ENCODE measurements at regions of chrX and their contacts with region 1.

Region 1: DNA sequence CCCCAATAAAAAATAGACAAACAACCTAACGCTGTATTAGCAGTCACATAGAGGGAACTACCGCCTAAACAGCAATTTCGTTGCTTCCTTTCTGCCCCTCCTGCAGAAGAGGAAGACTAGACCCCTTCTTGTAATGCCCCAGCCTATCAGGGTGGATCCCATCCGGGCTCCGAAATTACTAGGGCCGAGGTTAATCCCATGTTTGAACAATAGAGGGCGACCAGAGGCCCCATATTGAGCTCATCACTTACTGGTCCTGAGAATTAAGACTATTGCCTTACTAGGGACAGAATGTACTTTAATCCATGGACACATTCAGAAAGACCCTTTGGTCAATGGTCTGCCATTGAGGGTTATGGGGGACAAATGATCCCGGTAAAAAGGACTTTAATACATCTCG is 11.8 kb upstream of the ZNF630 start:
- DNase-seq: no peak
- ATAC-seq: peak; percentile 94
- H3K4me3 ChIP-seq: no peak overlapping the region
- H3K27ac ChIP-seq: no peak overlapping the region
- H3K4me1 ChIP-seq: no peaks in the 10 kb centered on the region
- H3K27me3 ChIP-seq: no peaks in the 10 kb centered on the region
- CTCF ChIP-seq: peak; percentile 55 to 63 (median 57)
- EP300 ChIP-seq: no peak
- POLR2A ChIP-seq: no peak
- RAD21 ChIP-seq: peak; percentile 76

Region 2: GRCh38 chrX:47683146-47683828 is 399.9 kb before region 1 on chrX:
- CTCF ChIA-PET with region 1: no interaction called
- POLR2A ChIA-PET with region 1: no interaction called
- RAD21 ChIA-PET with region 1: no interaction called
- SMC1A ChIA-PET with region 1: no interaction called
- in situ Hi-C with region 1: no loop called
- intact Hi-C with region 1: no loop called
- DNase-seq: no peak
- ATAC-seq: no peak
- H3K4me3 ChIP-seq: no peak overlapping the region
- H3K27ac ChIP-seq: no peak overlapping the region
- H3K4me1 ChIP-seq: no peaks in the 10 kb centered on the region
- H3K27me3 ChIP-seq: no peaks in the 10 kb centered on the region
- CTCF ChIP-seq: no peak
- EP300 ChIP-seq: no peak
- POLR2A ChIP-seq: no peak
- RAD21 ChIP-seq: no peak

Region 3: DNA sequence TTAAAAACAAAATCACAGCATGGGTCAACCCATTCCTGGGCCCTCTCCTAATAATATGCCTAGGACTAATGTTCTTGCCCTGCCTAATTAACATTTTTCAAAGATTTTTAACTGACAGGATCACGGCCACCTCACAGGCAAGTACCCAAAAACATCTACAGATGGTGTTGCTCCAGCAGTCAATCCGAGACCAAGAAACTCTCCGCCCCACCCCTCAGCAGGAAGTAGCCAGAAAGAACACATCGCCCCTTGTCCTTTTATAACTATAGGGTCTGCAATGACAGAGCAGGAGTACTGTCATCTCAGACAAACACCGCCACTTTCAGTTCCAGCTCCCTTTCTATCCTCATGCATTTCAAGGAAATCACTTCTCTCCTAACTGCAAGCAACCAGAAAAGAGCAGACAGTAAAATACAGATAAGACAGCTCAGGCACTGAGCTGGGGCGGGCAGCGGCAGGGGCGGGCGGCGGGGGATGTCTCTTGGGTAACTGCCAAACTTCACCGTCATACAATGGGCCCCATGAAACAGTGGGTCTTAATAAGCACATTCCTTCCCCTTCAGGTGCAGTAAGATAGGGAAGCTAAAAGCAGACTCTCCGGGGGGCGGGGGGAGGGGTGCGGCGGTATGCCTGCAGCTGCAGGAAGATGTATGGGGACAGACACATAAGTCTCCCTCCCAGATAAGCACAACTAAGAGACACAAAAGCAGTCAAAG is 146.8 kb before region 1 on chrX:
- CTCF ChIA-PET with region 1: no interaction called
- POLR2A ChIA-PET with region 1: no interaction called
- RAD21 ChIA-PET with region 1: no interaction called
- SMC1A ChIA-PET with region 1: no interaction called
- in situ Hi-C with region 1: no loop called
- intact Hi-C with region 1: no loop called
- DNase-seq: no peak
- ATAC-seq: peak; percentile 81
- H3K4me3 ChIP-seq: no peak overlapping the region
- H3K27ac ChIP-seq: no peak overlapping the region
- H3K4me1 ChIP-seq: no peaks in the 10 kb centered on the region
- H3K27me3 ChIP-seq: no peaks in the 10 kb centered on the region
- CTCF ChIP-seq: no peak
- EP300 ChIP-seq: no peak
- POLR2A ChIP-seq: no peak
- RAD21 ChIP-seq: no peak

Region 4: GRCh38 chrX:48180811-48181210 is 97.6 kb after region 1 on chrX:
- CTCF ChIA-PET with region 1: no interaction called
- POLR2A ChIA-PET with region 1: no interaction called
- RAD21 ChIA-PET with region 1: no interaction called
- SMC1A ChIA-PET with region 1: no interaction called
- in situ Hi-C with region 1: no loop called
- intact Hi-C with region 1: no loop called
- DNase-seq: no peak
- ATAC-seq: no peak
- H3K4me3 ChIP-seq: no peak overlapping the region
- H3K27ac ChIP-seq: no peak overlapping the region
- H3K4me1 ChIP-seq: no peaks in the 10 kb centered on the region
- H3K27me3 ChIP-seq: no peaks in the 10 kb centered on the region
- CTCF ChIP-seq: no peak
- EP300 ChIP-seq: no peak
- POLR2A ChIP-seq: no peak
- RAD21 ChIP-seq: no peak

Region 5: GRCh38 chrX:48468693-48469691 is 385.8 kb after region 1 on chrX:
- CTCF ChIA-PET with region 1: interaction called, 7 read pairs
- POLR2A ChIA-PET with region 1: no interaction called
- RAD21 ChIA-PET with region 1: no interaction called
- SMC1A ChIA-PET with region 1: interaction called, 6 read pairs
- in situ Hi-C with region 1: no loop called
- intact Hi-C with region 1: loop called (anchors 10 kb)
- DNase-seq: no peak
- ATAC-seq: peak; percentile 58
- H3K4me3 ChIP-seq: peak overlapping the region; percentile 76
- H3K27ac ChIP-seq: peak overlapping the region; percentile 83
- H3K4me1 ChIP-seq: peaks cover 6% of the 10 kb centered on the region
- H3K27me3 ChIP-seq: no peaks in the 10 kb centered on the region
- CTCF ChIP-seq: peak; percentile 35 to 46 (median 45); a peak in 4 of 6 replicates
- EP300 ChIP-seq: no peak
- POLR2A ChIP-seq: peak; percentile 2
- RAD21 ChIP-seq: peak; percentile 39; the same call in 1 of the 2 replicates

Region 6: DNA sequence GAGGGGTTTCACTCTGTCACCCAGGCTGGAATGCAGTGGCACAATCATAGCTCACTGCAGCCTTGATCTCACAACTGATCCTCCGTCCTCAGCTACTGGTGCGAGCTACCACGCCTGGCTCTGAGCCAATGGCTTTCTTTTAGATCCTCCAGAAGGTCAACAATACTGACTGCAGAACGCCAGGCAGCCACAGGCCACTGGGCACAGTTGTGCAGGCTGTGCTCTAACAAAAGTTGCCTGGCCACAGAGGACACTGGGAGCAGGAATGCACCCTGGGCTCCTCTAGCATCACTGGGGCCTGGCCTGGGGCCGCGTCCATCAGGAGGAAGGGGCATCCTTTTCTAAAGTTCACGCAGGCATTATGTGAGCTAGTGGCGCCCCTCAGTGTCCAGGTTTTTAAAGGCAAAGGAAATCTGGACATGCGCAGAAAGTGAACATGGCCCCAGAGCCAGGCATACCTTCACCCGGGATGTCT is 410.7 kb after region 1 on chrX:
- CTCF ChIA-PET with region 1: interaction called, 17 read pairs
- POLR2A ChIA-PET with region 1: no interaction called
- RAD21 ChIA-PET with region 1: interaction called, 6 read pairs
- SMC1A ChIA-PET with region 1: interaction called, 3 read pairs
- in situ Hi-C with region 1: loop called (anchors 10 kb)
- intact Hi-C with region 1: loop called (anchors 1 kb)
- DNase-seq: no peak
- ATAC-seq: peak; percentile 27; the same call in 2 of the 3 replicates
- H3K4me3 ChIP-seq: no peak overlapping the region
- H3K27ac ChIP-seq: no peak overlapping the region
- H3K4me1 ChIP-seq: no peaks in the 10 kb centered on the region
- H3K27me3 ChIP-seq: no peaks in the 10 kb centered on the region
- CTCF ChIP-seq: peak in 1 of 3 experiments; percentile 30; a peak in 3 of 6 replicates
- EP300 ChIP-seq: no peak
- POLR2A ChIP-seq: no peak
- RAD21 ChIP-seq: peak; percentile 45

Measured in GM12878 (cell line).